ENCODE measurements at regions of chr16 and their contacts with region 1.

Region 1: GRCh38 chr16:66872943-66873684 is 7.2 kb upstream of the PDP2 start:
- DNase-seq: peak; percentile 90
- ATAC-seq: peak; percentile 91
- H3K4me3 Mint-ChIP-seq: peak overlapping the region; percentile 73
- H3K27ac Mint-ChIP-seq: peak overlapping the region; percentile 89
- H3K4me1 Mint-ChIP-seq: peaks cover 14% of the 10 kb centered on the region
- H3K27me3 Mint-ChIP-seq: peaks cover 10% of the 10 kb centered on the region
- CTCF ChIP-seq: peak; percentile 86

Region 2: GRCh38 chr16:66650707-66651473 is 222.2 kb before region 1 on chr16:
- CTCF ChIA-PET with region 1: interaction called, 13 read pairs
- POLR2A ChIA-PET with region 1: no interaction called
- DNase-seq: peak; percentile 88
- ATAC-seq: peak; percentile 97
- H3K4me3 Mint-ChIP-seq: peak overlapping the region; percentile 55
- H3K27ac Mint-ChIP-seq: 0 out of 2 replicates have a peak overlapping the region, but pooled peaks have one; percentile 37
- H3K4me1 Mint-ChIP-seq: peaks cover 18% of the 10 kb centered on the region
- H3K27me3 Mint-ChIP-seq: no peaks in the 10 kb centered on the region
- CTCF ChIP-seq: peak; percentile 80

Region 3: GRCh38 chr16:66751303-66751991 is 121.7 kb before region 1 on chr16 and contains the start of gene DYNC1LI2:
- CTCF ChIA-PET with region 1: interaction called, 13 read pairs
- POLR2A ChIA-PET with region 1: no interaction called
- DNase-seq: peak; percentile 77
- ATAC-seq: peak; percentile 94
- H3K4me3 Mint-ChIP-seq: peak within 1 kb of the TSS; percentile 87
- H3K27ac Mint-ChIP-seq: peak within 1 kb of the TSS; percentile 81
- H3K4me1 Mint-ChIP-seq: peaks cover 25% of the 10 kb centered on the region
- H3K27me3 Mint-ChIP-seq: peaks cover 21% of the 10 kb centered on the region
- CTCF ChIP-seq: peak; percentile 74
- total RNA-seq, gene DYNC1LI2: 82.7 to 89.8 TPM (median 89.7 TPM) in 3 replicates

Region 4: DNA sequence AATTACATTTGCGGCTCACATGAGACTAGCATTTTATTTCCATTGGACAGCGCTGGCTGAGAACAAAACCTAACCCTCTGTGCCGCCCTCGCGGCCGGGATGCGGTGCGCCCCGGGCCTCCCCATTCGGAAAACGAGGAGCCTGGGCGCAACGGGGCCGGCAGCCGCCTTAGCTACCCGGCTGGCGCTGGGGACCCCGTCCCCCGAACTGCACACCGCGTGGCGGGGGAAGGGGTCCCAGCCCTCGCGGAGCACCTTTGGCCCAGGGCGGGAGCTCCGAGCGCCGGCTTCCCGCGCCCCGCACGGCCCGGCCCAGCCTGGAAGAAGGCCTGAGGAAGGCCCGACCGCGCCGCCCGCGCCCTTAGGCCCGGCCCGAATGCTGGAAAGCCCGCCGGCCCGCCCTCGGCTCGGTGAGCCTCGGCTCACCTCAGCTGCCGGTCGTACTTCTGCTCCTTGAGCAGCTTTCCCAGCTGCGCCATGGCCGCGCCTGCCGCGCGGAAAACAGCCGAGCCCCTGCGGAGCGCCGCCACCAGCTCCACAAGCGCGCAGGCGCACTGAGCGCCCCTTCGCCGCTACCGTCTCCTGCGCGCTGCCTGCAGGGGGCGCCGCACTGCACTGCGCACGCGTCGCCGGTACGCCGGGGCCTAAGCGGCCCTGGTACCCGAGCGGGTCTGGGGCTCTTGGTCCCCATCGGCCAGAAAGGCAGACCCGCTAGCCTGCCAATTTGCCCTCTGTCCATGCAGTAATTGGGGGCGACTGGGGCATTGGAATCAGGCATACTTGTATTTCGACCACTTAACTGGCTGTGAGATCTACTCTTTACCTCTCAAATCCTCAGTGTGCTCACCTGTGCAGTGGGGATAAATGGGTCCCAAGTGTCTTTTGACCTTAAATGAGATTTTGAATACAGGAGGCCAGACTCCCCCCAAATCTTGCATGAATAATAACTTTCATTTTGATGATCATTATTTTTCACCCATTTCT is 42.4 kb before region 1 on chr16 and contains the start of gene NAE1:
- CTCF ChIA-PET with region 1: interaction called, 100 read pairs
- POLR2A ChIA-PET with region 1: interaction called, 7 read pairs
- DNase-seq: peak; percentile 90
- ATAC-seq: peak; percentile 96
- H3K4me3 Mint-ChIP-seq: peak within 1 kb of the TSS; percentile 67
- H3K27ac Mint-ChIP-seq: no peak within 1 kb of the TSS
- H3K4me1 Mint-ChIP-seq: peaks cover 20% of the 10 kb centered on the region
- H3K27me3 Mint-ChIP-seq: peaks cover 14% of the 10 kb centered on the region
- CTCF ChIP-seq: peak; percentile 87
- total RNA-seq, gene NAE1: 103 to 129 TPM (median 107 TPM) in 3 replicates

Region 5: GRCh38 chr16:66850115-66850815 is 22.8 kb before region 1 on chr16:
- CTCF ChIA-PET with region 1: interaction called, 34 read pairs
- POLR2A ChIA-PET with region 1: interaction called, 5 read pairs
- DNase-seq: no peak
- ATAC-seq: no peak
- H3K4me3 Mint-ChIP-seq: no peak overlapping the region
- H3K27ac Mint-ChIP-seq: no peak overlapping the region
- H3K4me1 Mint-ChIP-seq: peaks cover 9% of the 10 kb centered on the region
- H3K27me3 Mint-ChIP-seq: peaks cover 33% of the 10 kb centered on the region
- CTCF ChIP-seq: no peak

Region 6: GRCh38 chr16:66894948-66895688 is 22.0 kb after region 1 on chr16:
- CTCF ChIA-PET with region 1: interaction called, 11 read pairs
- POLR2A ChIA-PET with region 1: no interaction called
- DNase-seq: peak; percentile 69
- ATAC-seq: peak; percentile 85
- H3K4me3 Mint-ChIP-seq: no peak overlapping the region
- H3K27ac Mint-ChIP-seq: peak overlapping the region; percentile 19
- H3K4me1 Mint-ChIP-seq: peaks cover 7% of the 10 kb centered on the region
- H3K27me3 Mint-ChIP-seq: no peaks in the 10 kb centered on the region; the same call in 1 of the 2 replicates
- CTCF ChIP-seq: peak; percentile 32; the same call in 1 of the 2 replicates

Region 7: DNA sequence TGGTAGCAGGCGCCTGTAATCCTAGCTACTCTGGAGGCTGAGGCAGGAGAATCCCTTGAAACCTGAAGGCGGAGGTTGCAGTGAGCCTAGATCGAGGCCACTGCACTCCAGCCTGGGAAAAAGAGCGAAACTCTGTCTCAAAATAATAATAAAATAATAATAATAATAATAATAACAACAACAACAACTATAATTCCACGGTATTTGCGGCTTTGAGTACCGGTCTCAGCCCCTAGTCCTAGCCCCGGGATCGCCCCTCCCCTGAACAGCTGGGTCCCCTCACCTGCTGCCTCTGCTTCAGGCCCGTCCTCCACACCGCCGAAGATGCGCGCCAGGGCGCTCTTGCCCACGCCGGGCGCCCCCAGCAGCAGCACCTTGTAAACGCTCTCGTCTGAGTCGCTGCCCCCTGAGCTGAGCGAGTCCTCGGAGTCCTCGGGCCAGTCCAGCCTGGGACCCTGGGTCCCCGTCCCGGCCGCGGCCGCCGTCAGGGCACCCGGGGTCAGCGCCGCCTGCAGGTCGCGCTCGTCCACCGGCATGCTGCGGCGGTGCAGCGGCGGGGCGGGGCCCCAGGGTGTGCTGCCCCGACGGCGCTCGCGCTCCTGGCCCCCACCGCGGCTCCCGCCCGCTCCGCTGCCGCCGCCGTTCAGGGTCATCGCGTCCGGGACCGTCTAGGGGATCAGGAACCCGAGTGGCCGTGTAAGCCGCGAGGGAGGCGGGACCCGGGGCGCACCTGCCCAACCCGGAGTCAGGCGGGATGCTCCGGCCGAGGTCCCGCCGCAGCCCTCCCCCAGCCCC is 51.6 kb after region 1 on chr16:
- CTCF ChIA-PET with region 1: interaction called, 30 read pairs
- POLR2A ChIA-PET with region 1: no interaction called
- DNase-seq: peak; percentile 74
- ATAC-seq: peak; percentile 85
- H3K4me3 Mint-ChIP-seq: peak overlapping the region; percentile 73
- H3K27ac Mint-ChIP-seq: no peak overlapping the region
- H3K4me1 Mint-ChIP-seq: peaks cover 7% of the 10 kb centered on the region; the same call in 1 of the 2 replicates
- H3K27me3 Mint-ChIP-seq: peaks cover 59% of the 10 kb centered on the region
- CTCF ChIP-seq: no peak

Region 8: GRCh38 chr16:66954097-66954659 is 81.1 kb after region 1 on chr16:
- CTCF ChIA-PET with region 1: no interaction called
- POLR2A ChIA-PET with region 1: no interaction called
- DNase-seq: peak; percentile 85
- ATAC-seq: peak; percentile 88
- H3K4me3 Mint-ChIP-seq: no peak overlapping the region
- H3K27ac Mint-ChIP-seq: no peak overlapping the region
- H3K4me1 Mint-ChIP-seq: peaks cover 4% of the 10 kb centered on the region
- H3K27me3 Mint-ChIP-seq: peaks cover 40% of the 10 kb centered on the region
- CTCF ChIP-seq: peak; percentile 62; the same call in 1 of the 2 replicates